ENCODE measurements at regions of chr1 and their contacts with region 1.

Region 1: GRCh38 chr1:59332983-59333382 is 36.1 kb downstream of the FGGY start:
- DNase-seq: peak; percentile 47
- H3K4me3 Mint-ChIP-seq: peak overlapping the region; percentile 15
- H3K27ac Mint-ChIP-seq: peak overlapping the region; percentile 78
- H3K4me1 Mint-ChIP-seq: peaks cover 44% of the 10 kb centered on the region
- H3K27me3 Mint-ChIP-seq: no peaks in the 10 kb centered on the region

Region 2: GRCh38 chr1:59354709-59355337 is 21.8 kb after region 1 on chr1:
- intact Hi-C with region 1: loop called (anchors 1 kb)
- DNase-seq: no peak
- H3K4me3 Mint-ChIP-seq: peak overlapping the region; percentile 13
- H3K27ac Mint-ChIP-seq: peak overlapping the region; percentile 94
- H3K4me1 Mint-ChIP-seq: peaks cover 41% of the 10 kb centered on the region
- H3K27me3 Mint-ChIP-seq: peaks cover 2% of the 10 kb centered on the region

Measured in activated T-helper 1 cell treated with anti-CD3 and anti-CD28 coated beads, Interleukin-12 subunit alpha, Interleukin-12 subunit beta, Interleukin-2, Interleukin-4 antibody, amounts not matched to agents 30 ng/mL and 10 ng/mL and 1 ng/mL, durations not matched to agents 14 hours and 24 hours and 36 hours (primary cell).